ENCODE measurements at regions of chr5 and their contacts with region 1.

Region 1: GRCh38 chr5:776792-777711 is 7.5 kb downstream of the ZDHHC11B start:
- DNase-seq: peak in 2 of 5 donors; percentile 29 to 53
- ATAC-seq: no peak
- H3K4me3 ChIP-seq: no peak overlapping the region
- H3K27ac ChIP-seq: peak overlapping the region in 1 of 12 donors; percentile 4
- H3K4me1 ChIP-seq: peaks cover 0 to 41% (median 1%) of the 10 kb centered on the region in 12 donors
- H3K27me3 ChIP-seq: no peaks in the 10 kb centered on the region
- CTCF ChIP-seq: no peak
- POLR2A ChIP-seq: no peak

Region 2: DNA sequence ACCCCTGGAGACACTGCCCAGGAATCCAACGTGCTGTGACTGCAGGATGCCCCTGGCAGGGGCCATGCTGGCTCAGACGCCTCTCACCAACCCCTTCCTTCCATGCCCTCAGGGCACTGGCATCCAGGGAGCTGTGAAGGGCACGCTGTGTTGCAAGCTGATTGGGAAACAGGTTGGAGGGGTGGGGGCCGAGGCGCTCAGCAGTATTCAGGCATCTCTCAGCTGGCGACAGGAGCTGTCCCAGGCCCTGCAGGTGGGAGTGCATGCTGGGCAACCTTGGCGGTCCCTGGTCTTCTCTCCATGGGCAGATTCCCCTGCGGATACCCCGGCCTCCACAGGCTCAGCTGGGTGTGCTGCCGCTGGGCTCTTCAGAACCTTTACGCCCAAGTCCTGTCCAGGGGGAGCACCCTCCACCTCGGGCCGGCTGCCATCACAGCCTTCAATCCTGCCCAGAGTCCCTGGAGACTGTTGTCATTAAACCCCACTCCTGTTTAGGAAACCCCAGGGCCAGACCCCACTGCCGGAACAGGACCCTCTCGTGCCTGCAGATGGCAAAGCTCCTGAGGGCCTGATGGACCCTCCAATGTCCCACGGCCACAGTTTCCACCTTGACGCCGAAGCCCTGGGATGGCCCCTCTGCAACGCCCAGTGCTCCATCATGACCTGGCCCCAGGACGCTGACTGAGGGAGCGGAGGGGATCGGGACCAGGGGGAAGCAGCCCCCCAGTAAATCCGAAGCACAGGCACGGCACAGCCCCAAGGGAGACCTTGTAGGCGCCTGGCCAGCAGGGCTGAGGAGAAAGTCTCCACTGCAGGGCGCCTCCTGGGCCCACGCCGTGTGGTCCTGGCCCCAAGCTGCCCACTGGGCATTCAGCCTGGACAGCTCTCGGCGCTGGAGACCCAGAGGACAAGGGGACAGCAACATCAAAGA is 93.2 kb before region 1 on chr5:
- intact Hi-C with region 1: loop called in 4 of 10 experiments (anchors 2 to 10 kb)
- DNase-seq: peak in 4 of 5 donors; percentile 6 to 70 (median 60)
- ATAC-seq: peak; percentile 50 to 85 (median 68)
- H3K4me3 ChIP-seq: no peak overlapping the region
- H3K27ac ChIP-seq: peak overlapping the region in 3 of 12 donors; percentile 7 to 52 (median 38)
- H3K4me1 ChIP-seq: peaks cover 0 to 17% (median 0%) of the 10 kb centered on the region in 12 donors
- H3K27me3 ChIP-seq: no peaks in the 10 kb centered on the region
- CTCF ChIP-seq: no peak
- POLR2A ChIP-seq: no peak

Region 3: GRCh38 chr5:691817-692528 is 85.1 kb before region 1 on chr5:
- intact Hi-C with region 1: loop called in 2 of 10 experiments (anchors 10 kb)
- DNase-seq: no peak
- ATAC-seq: no peak
- H3K4me3 ChIP-seq: peak overlapping the region in 11 of 12 donors; percentile 45 to 76 (median 60)
- H3K27ac ChIP-seq: peak overlapping the region in 3 of 12 donors; percentile 71 to 86 (median 86)
- H3K4me1 ChIP-seq: peaks cover 0 to 5% (median 0%) of the 10 kb centered on the region in 12 donors
- H3K27me3 ChIP-seq: no peaks in the 10 kb centered on the region
- CTCF ChIP-seq: no peak
- POLR2A ChIP-seq: no peak

Region 4: GRCh38 chr5:821504-821903 is 44.5 kb after region 1 on chr5:
- intact Hi-C with region 1: no loop called
- DNase-seq: no peak
- ATAC-seq: no peak
- H3K4me3 ChIP-seq: no peak overlapping the region
- H3K27ac ChIP-seq: no peak overlapping the region
- H3K4me1 ChIP-seq: no peaks in the 10 kb centered on the region
- H3K27me3 ChIP-seq: no peaks in the 10 kb centered on the region
- CTCF ChIP-seq: no peak
- POLR2A ChIP-seq: no peak

Region 5: DNA sequence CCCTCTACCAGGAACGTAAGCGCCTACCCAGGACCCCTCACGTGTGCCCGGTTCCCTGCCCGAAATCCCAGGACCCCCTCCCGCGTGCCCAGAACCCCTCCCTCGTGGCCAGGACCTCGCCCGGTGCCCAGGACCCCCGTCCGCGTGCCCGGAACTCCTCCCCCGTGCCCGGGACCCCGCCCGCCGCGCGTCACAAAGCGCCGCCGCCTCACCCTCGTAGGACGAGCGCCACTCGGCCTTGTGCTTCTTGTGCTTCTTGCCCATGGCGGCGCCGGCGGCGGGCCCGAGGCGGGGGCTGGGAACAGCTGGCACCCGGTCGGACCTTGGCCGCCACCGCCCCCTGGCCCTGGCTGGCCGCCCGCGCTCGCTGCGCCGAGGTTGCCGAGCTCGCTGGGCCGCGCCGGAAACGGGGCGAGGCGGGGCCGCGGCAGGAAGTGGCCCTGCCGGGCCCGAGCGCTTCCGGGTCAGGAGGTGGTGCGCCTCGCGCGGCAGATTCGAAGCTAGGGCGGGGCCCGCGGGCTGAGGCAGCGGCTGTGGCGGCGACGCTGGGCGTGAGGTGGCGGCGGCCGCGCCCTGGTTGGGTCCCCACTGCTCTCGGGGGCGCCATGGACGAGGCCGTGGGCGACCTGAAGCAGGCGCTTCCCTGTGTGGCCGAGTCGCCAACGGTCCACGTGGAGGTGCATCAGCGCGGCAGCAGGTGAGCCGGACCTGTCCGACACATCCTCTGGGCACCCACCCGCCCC is 115.5 kb after region 1 on chr5 and contains the starts of genes BRD9 and TRIP13:
- intact Hi-C with region 1: loop called in 1 of 10 experiments (anchors 5 kb)
- DNase-seq: peak; percentile 84 to 92 (median 87)
- ATAC-seq: peak; percentile 69 to 98 (median 96)
- H3K4me3 ChIP-seq: peak within 1 kb of the TSS; percentile 48 to 99 (median 84)
- H3K27ac ChIP-seq: peak within 1 kb of the TSS; percentile 66 to 97 (median 91)
- H3K4me1 ChIP-seq: peaks cover 0 to 24% (median 14%) of the 10 kb centered on the region in 12 donors
- H3K27me3 ChIP-seq: no peaks in the 10 kb centered on the region
- CTCF ChIP-seq: peak in 6 of 12 donors; percentile 9 to 27 (median 20)
- POLR2A ChIP-seq: peak in 1 of 2 donors; percentile 64
- total RNA-seq, gene BRD9: 17.9 to 32.1 (median 23.9) TPM
- total RNA-seq, gene TRIP13: 0.31 to 4.2 (median 0.49) TPM